WTC11 (cell line): ENCODE measurements at regions of chr11 and their contacts with region 1.

Region 1: GRCh38 chr11:59263225-59263894 is 50.6 kb upstream of the MPEG1 start:
- DNase-seq: peak; percentile 76
- ATAC-seq: peak; percentile 91
- H3K4me3 Mint-ChIP-seq: no peak overlapping the region
- H3K27ac Mint-ChIP-seq: no peak overlapping the region
- H3K4me1 Mint-ChIP-seq: peaks cover 7% of the 10 kb centered on the region
- H3K27me3 Mint-ChIP-seq: no peaks in the 10 kb centered on the region
- CTCF ChIP-seq: no peak; the same call in 1 of the 2 replicates

Region 2: DNA sequence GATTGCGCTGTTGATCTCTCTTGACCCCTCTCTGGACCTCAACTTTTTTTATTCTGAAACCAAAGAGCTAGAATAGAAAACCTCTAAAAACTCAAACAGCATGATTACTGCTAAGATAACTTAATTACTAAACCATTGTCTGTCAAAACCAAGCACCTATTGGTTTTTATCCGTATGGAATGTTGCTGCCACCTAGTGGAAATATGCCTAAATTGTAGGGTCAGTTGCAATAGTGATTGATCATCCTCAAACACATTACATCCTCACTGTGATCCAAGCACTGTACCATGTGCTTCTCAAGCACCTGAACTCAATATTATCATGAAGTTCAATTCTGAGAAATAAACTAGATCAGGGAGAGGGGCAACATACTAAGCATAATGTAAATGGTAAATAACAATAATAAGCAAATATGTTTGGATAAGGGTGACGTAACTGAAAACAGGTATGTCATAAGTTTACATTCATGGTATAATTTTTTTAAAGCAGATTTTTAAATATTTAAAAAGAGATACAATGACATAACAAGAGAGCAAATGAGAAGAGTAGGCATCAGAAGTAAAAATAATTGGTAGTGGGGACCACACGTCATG is 166.7 kb after region 1 on chr11:
- CTCF ChIA-PET with region 1: interaction called, 20 read pairs
- POLR2A ChIA-PET with region 1: no interaction called
- DNase-seq: peak; percentile 18
- ATAC-seq: peak; percentile 58; the same call in 1 of the 2 replicates
- H3K4me3 Mint-ChIP-seq: no peak overlapping the region
- H3K27ac Mint-ChIP-seq: no peak overlapping the region
- H3K4me1 Mint-ChIP-seq: peaks cover 24% of the 10 kb centered on the region
- H3K27me3 Mint-ChIP-seq: no peaks in the 10 kb centered on the region
- CTCF ChIP-seq: peak; percentile 82